ENCODE measurements at regions of chr13 and their contacts with region 1.

Region 1: DNA sequence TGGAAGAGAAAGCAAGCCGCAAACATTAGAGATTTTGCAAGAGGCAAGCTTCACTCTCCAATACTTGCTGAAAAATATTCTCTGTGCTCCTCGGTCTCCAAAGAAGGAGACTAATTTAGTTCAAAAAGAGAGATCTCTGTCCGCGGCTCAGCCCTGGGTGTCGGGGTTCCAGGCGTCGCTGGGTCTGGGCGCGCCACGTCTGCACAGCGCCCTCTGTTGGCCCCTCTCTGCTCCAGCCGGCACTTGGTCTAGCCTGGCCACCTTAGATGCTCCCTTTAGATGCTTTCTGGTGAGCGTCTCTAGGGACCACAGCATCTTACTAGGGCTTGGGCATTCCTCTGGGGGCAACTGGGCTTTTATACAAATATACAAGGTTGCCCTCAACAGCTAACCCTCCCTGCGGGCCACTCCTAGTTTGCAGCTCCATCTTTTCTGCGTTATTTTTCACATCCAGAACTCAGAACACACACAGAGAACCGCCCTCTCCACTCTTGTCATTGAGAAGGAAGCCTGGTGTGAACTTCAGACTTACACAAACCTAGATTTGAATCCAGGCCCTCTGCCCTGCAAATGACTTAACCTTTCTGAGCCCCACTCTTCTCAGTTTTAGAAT is 78.3 kb downstream of the CYSLTR2 start:
- DNase-seq: peak; percentile 25
- ATAC-seq: peak; percentile 50
- H3K4me3 Mint-ChIP-seq: peak overlapping the region; percentile 20
- H3K27ac Mint-ChIP-seq: no peak overlapping the region
- H3K4me1 Mint-ChIP-seq: peaks cover 2% of the 10 kb centered on the region
- H3K27me3 Mint-ChIP-seq: peaks cover 11% of the 10 kb centered on the region
- CTCF ChIP-seq: no peak

Region 2: GRCh38 chr13:48334534-48335127 is 397.4 kb before region 1 on chr13:
- CTCF ChIA-PET with region 1: interaction called, 4 read pairs
- POLR2A ChIA-PET with region 1: no interaction called
- intact Hi-C with region 1: loop called (anchors 1 kb)
- DNase-seq: no peak
- ATAC-seq: peak; percentile 37
- H3K4me3 Mint-ChIP-seq: no peak overlapping the region
- H3K27ac Mint-ChIP-seq: no peak overlapping the region
- H3K4me1 Mint-ChIP-seq: peaks cover 17% of the 10 kb centered on the region
- H3K27me3 Mint-ChIP-seq: no peaks in the 10 kb centered on the region
- CTCF ChIP-seq: peak; percentile 42

Region 3: GRCh38 chr13:48595431-48596429 is 136.3 kb before region 1 on chr13:
- CTCF ChIA-PET with region 1: no interaction called
- POLR2A ChIA-PET with region 1: no interaction called
- intact Hi-C with region 1: loop called (anchors 1 kb)
- DNase-seq: no peak
- ATAC-seq: no peak
- H3K4me3 Mint-ChIP-seq: no peak overlapping the region
- H3K27ac Mint-ChIP-seq: no peak overlapping the region
- H3K4me1 Mint-ChIP-seq: no peaks in the 10 kb centered on the region
- H3K27me3 Mint-ChIP-seq: peaks cover 21% of the 10 kb centered on the region
- CTCF ChIP-seq: no peak

Region 4: GRCh38 chr13:48715977-48716376 is 16.1 kb before region 1 on chr13:
- CTCF ChIA-PET with region 1: no interaction called
- POLR2A ChIA-PET with region 1: no interaction called
- intact Hi-C with region 1: no loop called
- DNase-seq: no peak
- ATAC-seq: no peak
- H3K4me3 Mint-ChIP-seq: no peak overlapping the region
- H3K27ac Mint-ChIP-seq: no peak overlapping the region
- H3K4me1 Mint-ChIP-seq: no peaks in the 10 kb centered on the region
- H3K27me3 Mint-ChIP-seq: peaks cover 8% of the 10 kb centered on the region
- CTCF ChIP-seq: no peak

Region 5: DNA sequence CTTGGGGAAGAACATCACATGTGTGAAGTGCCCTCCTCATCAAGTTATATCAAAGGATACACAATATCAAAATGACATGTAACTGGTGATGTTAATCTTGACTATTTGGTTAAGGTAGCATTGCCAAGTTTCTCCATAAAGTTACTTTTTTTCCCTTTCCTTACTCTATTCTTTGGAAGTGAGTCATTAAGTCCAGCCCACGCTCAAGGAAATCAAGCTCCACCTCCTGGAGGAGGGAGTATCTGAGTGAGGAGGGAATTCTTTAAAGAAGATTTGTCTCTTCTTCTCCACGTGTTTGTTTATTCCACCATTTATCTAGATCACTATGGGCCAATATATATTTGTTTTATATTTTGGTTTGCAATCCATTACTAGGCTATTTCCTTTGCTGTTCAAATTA is 210.1 kb after region 1 on chr13:
- CTCF ChIA-PET with region 1: no interaction called
- POLR2A ChIA-PET with region 1: no interaction called
- intact Hi-C with region 1: no loop called
- DNase-seq: no peak
- ATAC-seq: no peak
- H3K4me3 Mint-ChIP-seq: no peak overlapping the region
- H3K27ac Mint-ChIP-seq: no peak overlapping the region
- H3K4me1 Mint-ChIP-seq: no peaks in the 10 kb centered on the region
- H3K27me3 Mint-ChIP-seq: peaks cover 26% of the 10 kb centered on the region
- CTCF ChIP-seq: no peak